Activated naive CD4-positive, alpha-beta T cell treated with anti-CD3 and anti-CD28 coated beads for 36 hours (primary cell): ENCODE measurements at regions of chr11 and their contacts with region 1.

Region 1: DNA sequence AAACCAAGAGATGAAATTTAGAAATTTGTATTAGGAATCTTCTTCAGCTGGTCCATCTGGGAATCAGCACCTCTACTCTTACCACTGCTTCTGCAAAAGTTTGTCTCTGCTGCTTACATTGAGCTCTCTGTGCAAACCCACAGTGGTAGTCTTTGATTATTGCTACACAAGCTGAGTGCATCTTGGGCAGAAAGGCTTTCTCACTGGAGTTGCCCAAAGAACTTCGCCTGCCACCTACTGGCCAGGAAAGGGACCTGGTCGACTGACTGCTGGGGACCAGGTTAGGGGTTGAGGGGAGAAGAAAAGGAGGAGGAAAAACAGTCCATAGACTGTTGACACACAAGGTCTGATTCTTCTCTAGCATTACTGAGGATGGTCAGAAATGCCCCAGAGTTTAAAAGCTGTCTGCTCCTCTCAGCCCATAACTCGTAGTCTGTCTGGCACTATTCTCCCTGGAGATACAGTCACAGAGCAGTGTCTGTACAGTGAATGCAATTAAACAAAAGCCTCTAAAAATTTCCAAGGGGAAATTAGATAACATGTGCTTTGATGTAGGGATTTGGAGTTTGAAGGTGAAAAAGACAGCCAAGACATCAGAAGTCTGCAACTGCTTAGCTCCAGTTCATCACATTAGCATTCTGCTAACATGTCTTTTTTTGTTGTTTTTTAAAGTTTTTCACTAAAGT is 215.0 kb upstream of the CTSC start:
- DNase-seq: peak; percentile 76
- H3K4me3 Mint-ChIP-seq: no peak overlapping the region
- H3K27ac Mint-ChIP-seq: no peak overlapping the region
- H3K4me1 Mint-ChIP-seq: peaks cover 3% of the 10 kb centered on the region
- H3K27me3 Mint-ChIP-seq: no peaks in the 10 kb centered on the region

Region 2: GRCh38 chr11:88016392-88017170 is 535.9 kb before region 1 on chr11:
- CTCF ChIA-PET with region 1: interaction called, 41 read pairs
- intact Hi-C with region 1: loop called (anchors 1 kb)
- DNase-seq: peak; percentile 77
- H3K4me3 Mint-ChIP-seq: no peak overlapping the region
- H3K27ac Mint-ChIP-seq: no peak overlapping the region
- H3K4me1 Mint-ChIP-seq: no peaks in the 10 kb centered on the region
- H3K27me3 Mint-ChIP-seq: no peaks in the 10 kb centered on the region

Region 3: GRCh38 chr11:88886796-88887195 is 334.3 kb after region 1 on chr11:
- CTCF ChIA-PET with region 1: no interaction called
- intact Hi-C with region 1: loop called (anchors 5 kb)
- DNase-seq: peak; percentile 36
- H3K4me3 Mint-ChIP-seq: no peak overlapping the region
- H3K27ac Mint-ChIP-seq: no peak overlapping the region
- H3K4me1 Mint-ChIP-seq: no peaks in the 10 kb centered on the region
- H3K27me3 Mint-ChIP-seq: no peaks in the 10 kb centered on the region